Left ventricle myocardium superior (tissue), 1 donor: ENCODE measurements at regions of chr17 and their contacts with region 1.

Region 1: GRCh38 chr17:9522074-9522473 is 53.5 kb downstream of the STX8 start:
- DNase-seq: no peak
- ATAC-seq: peak; percentile 62

Region 2: GRCh38 chr17:9307292-9308042 is 214.6 kb before region 1 on chr17:
- intact Hi-C with region 1: loop called (anchors 10 kb)
- DNase-seq: no peak
- ATAC-seq: no peak

Region 3: GRCh38 chr17:9473715-9474114 is 48.4 kb before region 1 on chr17:
- intact Hi-C with region 1: no loop called
- DNase-seq: no peak
- ATAC-seq: no peak